Common myeloid progenitor, CD34-positive (primary cell): ENCODE measurements at regions of chr4 and their contacts with region 1.

Region 1: DNA sequence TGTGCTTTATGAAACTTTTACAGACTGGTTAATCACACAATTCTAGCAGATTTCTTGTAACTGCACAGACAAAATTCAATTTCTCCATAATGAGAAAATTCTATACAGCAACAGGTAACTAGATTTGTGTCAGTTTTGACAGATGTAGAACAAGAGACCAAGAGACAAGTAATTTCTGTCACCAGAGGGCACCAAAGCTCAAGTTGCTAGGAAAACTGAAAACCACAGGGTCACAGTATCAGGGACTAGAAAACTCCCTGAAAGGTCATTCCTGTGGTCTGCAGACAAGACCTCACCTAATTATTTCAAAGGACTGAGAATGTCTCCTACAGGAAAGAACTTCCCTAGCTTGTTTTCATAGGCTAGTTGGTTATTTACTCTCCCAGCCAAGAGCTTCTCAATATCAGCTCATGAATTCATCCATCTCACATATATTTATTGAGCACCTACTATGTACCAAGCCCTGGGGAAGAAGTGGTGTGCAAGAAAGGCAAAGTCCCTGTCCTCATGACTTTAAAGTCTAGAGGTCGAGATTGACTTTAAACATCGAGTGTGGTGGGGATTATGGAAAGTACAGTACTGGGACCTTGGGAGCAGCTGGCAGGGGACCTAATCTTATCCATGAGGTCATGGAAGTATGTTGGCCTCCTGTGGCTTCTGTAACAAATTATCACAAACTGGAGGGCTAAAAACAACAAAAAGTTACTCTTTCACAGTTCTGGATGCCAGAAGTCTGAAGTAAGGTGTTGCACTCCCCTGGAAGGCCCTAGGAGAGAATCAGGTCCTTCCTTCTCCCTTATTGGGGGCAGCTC is 47.8 kb upstream of the SETD7 start:
- DNase-seq: peak; percentile 59 to 75 (median 66)
- H3K4me3 ChIP-seq: no peak overlapping the region
- H3K27ac ChIP-seq: no peak overlapping the region
- H3K4me1 ChIP-seq: peaks cover 0 to 9% (median 6%) of the 10 kb centered on the region in 4 experiments
- H3K27me3 ChIP-seq: no peaks in the 10 kb centered on the region

Region 2: GRCh38 chr4:139581056-139581455 is 22.7 kb before region 1 on chr4:
- CTCF ChIA-PET with region 1: interaction called, 12 read pairs
- POLR2A ChIA-PET with region 1: interaction called, 3 read pairs
- DNase-seq: no peak
- H3K4me3 ChIP-seq: no peak overlapping the region
- H3K27ac ChIP-seq: no peak overlapping the region
- H3K4me1 ChIP-seq: no peaks in the 10 kb centered on the region
- H3K27me3 ChIP-seq: no peaks in the 10 kb centered on the region

Region 3: GRCh38 chr4:139593091-139593564 is 10.7 kb before region 1 on chr4:
- CTCF ChIA-PET with region 1: interaction called, 39 read pairs
- POLR2A ChIA-PET with region 1: no interaction called
- DNase-seq: no peak
- H3K4me3 ChIP-seq: no peak overlapping the region
- H3K27ac ChIP-seq: no peak overlapping the region
- H3K4me1 ChIP-seq: no peaks in the 10 kb centered on the region
- H3K27me3 ChIP-seq: peaks cover 0 to 4% (median 0%) of the 10 kb centered on the region in 5 experiments

Region 4: GRCh38 chr4:139619644-139620043 is 15.9 kb after region 1 on chr4:
- CTCF ChIA-PET with region 1: interaction called, 20 read pairs
- POLR2A ChIA-PET with region 1: no interaction called
- DNase-seq: peak in 2 of 3 donors; percentile 51 to 55
- H3K4me3 ChIP-seq: no peak overlapping the region
- H3K27ac ChIP-seq: no peak overlapping the region
- H3K4me1 ChIP-seq: no peaks in the 10 kb centered on the region
- H3K27me3 ChIP-seq: no peaks in the 10 kb centered on the region

Region 5: GRCh38 chr4:139639654-139640053 is 35.9 kb after region 1 on chr4:
- CTCF ChIA-PET with region 1: interaction called, 13 read pairs
- POLR2A ChIA-PET with region 1: no interaction called
- DNase-seq: no peak
- H3K4me3 ChIP-seq: no peak overlapping the region
- H3K27ac ChIP-seq: no peak overlapping the region
- H3K4me1 ChIP-seq: no peaks in the 10 kb centered on the region
- H3K27me3 ChIP-seq: no peaks in the 10 kb centered on the region

Region 6: GRCh38 chr4:139651282-139652194 is 47.8 kb after region 1 on chr4:
- CTCF ChIA-PET with region 1: interaction called, 97 read pairs
- POLR2A ChIA-PET with region 1: no interaction called
- DNase-seq: peak; percentile 80 to 90 (median 86)
- H3K4me3 ChIP-seq: peak overlapping the region in 1 of 7 experiments; percentile 56
- H3K27ac ChIP-seq: no peak overlapping the region
- H3K4me1 ChIP-seq: peaks cover 0 to 3% (median 2%) of the 10 kb centered on the region in 4 experiments
- H3K27me3 ChIP-seq: no peaks in the 10 kb centered on the region

Region 7: DNA sequence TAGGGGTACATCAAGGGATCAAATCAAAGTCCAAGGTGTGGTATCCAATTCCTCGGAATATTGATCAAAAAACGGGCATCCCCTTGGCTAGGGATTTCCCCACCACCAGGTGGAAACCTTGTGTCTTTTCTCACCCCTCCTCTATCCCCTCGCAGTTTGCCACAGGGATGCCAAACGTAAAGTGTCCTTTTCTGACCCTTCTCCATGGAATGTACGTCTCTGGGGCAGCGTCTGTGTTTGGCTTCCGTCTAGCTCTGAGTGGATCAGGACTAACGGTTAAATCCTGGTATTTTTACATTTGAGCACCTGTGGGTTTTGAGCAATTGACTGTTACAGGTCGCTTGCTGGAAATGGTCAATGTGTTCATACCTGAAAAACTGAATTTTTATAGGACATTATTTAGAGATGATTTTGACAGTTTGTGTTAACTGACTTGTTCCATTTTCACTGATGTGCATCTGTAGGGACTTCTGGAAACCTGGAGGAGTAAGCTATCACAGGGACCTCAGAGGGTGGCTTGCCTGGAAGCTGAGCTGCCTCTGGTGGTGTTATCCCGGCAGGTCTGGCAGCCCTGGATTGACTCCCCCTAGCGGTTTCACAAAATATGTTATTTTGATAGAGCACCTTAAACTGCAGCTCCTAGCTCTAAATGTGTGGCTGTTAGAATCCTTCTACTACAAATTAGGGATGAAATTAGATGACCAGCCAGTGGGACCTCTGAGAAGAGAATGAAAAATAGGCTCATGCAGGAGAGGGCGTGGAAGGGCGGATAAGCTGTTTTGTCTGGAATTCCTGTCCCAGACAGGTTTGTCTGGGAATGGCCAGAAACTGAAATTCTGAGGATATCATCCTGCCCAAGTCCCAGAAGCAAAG is 53.1 kb after region 1 on chr4:
- CTCF ChIA-PET with region 1: interaction called, 97 read pairs
- POLR2A ChIA-PET with region 1: no interaction called
- DNase-seq: peak; percentile 75 to 87 (median 86)
- H3K4me3 ChIP-seq: no peak overlapping the region
- H3K27ac ChIP-seq: no peak overlapping the region
- H3K4me1 ChIP-seq: peaks cover 13 to 16% (median 14%) of the 10 kb centered on the region in 4 experiments
- H3K27me3 ChIP-seq: no peaks in the 10 kb centered on the region

Region 8: GRCh38 chr4:139674875-139675550 is 71.2 kb after region 1 on chr4:
- CTCF ChIA-PET with region 1: no interaction called
- POLR2A ChIA-PET with region 1: no interaction called
- DNase-seq: peak in 2 of 3 donors; percentile 80 to 88
- H3K4me3 ChIP-seq: no peak overlapping the region
- H3K27ac ChIP-seq: no peak overlapping the region
- H3K4me1 ChIP-seq: peaks cover 3 to 10% (median 7%) of the 10 kb centered on the region in 4 experiments
- H3K27me3 ChIP-seq: no peaks in the 10 kb centered on the region

Region 9: DNA sequence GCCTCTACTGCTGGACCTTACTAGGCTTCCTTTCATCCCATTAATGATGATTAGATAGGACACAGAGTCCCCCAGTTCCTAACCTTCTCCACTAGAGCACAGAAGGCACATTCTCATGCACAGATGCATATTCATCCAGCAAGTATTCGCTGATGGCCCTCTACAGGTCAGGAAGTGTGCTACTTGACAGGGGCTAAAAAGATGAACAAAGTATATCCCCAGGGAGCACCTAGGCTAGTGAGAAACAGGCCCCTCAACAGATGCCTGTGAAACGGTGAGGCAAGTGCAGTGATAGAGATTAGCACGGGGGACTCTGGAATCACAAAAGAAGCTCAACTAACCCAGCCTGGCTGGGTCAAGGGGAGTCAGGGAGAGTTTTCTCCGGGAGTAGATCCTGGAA is 157.7 kb after region 1 on chr4:
- CTCF ChIA-PET with region 1: no interaction called
- POLR2A ChIA-PET with region 1: no interaction called
- DNase-seq: peak; percentile 49 to 76 (median 59)
- H3K4me3 ChIP-seq: no peak overlapping the region
- H3K27ac ChIP-seq: no peak overlapping the region
- H3K4me1 ChIP-seq: peaks cover 25 to 47% (median 43%) of the 10 kb centered on the region in 4 experiments
- H3K27me3 ChIP-seq: no peaks in the 10 kb centered on the region